ENCODE measurements at regions of chr17 and their contacts with region 1.

Region 1: GRCh38 chr17:5592382-5592781 is 8.1 kb upstream of the NLRP1 start:
- DNase-seq: no peak
- H3K4me3 Mint-ChIP-seq: no peak overlapping the region
- H3K27ac Mint-ChIP-seq: no peak overlapping the region
- H3K4me1 Mint-ChIP-seq: peaks cover under 1% of the 10 kb centered on the region
- H3K27me3 Mint-ChIP-seq: peaks cover 13% of the 10 kb centered on the region

Region 2: GRCh38 chr17:5706577-5707216 is 114.3 kb after region 1 on chr17:
- CTCF ChIA-PET with region 1: interaction called, 54 read pairs
- POLR2A ChIA-PET with region 1: no interaction called
- intact Hi-C with region 1: loop called (anchors 1 kb)
- DNase-seq: peak; percentile 72
- H3K4me3 Mint-ChIP-seq: no peak overlapping the region
- H3K27ac Mint-ChIP-seq: no peak overlapping the region
- H3K4me1 Mint-ChIP-seq: no peaks in the 10 kb centered on the region
- H3K27me3 Mint-ChIP-seq: peaks cover 15% of the 10 kb centered on the region

Region 3: GRCh38 chr17:6421700-6422604 is 829.6 kb after region 1 on chr17:
- CTCF ChIA-PET with region 1: interaction called, 20 read pairs
- POLR2A ChIA-PET with region 1: no interaction called
- intact Hi-C with region 1: loop called (anchors 1 kb)
- DNase-seq: peak; percentile 83
- H3K4me3 Mint-ChIP-seq: no peak overlapping the region
- H3K27ac Mint-ChIP-seq: no peak overlapping the region
- H3K4me1 Mint-ChIP-seq: peaks cover 2% of the 10 kb centered on the region
- H3K27me3 Mint-ChIP-seq: peaks cover 23% of the 10 kb centered on the region

Region 4: DNA sequence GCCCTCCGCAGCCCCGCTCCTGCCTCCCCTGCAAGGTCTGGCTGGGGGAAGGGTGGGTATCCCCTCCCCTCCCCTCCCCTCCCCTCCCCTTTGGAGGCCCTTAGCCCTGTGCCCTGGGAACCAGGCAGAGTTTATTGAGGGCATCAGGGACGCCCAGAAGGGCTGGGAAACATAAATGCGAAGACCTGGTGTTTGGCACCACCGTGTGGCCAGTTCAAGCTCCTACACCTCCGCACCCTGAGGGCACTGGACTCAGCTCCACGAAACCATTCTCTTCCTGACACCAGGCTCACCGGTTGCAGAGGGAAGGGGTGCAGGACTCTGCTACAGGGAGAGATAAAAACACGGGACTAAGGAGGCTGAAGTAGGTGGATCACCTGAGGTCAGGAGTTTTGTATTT is 843.6 kb after region 1 on chr17:
- CTCF ChIA-PET with region 1: interaction called, 15 read pairs
- POLR2A ChIA-PET with region 1: no interaction called
- intact Hi-C with region 1: no loop called
- DNase-seq: peak; percentile 72
- H3K4me3 Mint-ChIP-seq: no peak overlapping the region
- H3K27ac Mint-ChIP-seq: no peak overlapping the region
- H3K4me1 Mint-ChIP-seq: peaks cover 2% of the 10 kb centered on the region
- H3K27me3 Mint-ChIP-seq: peaks cover 17% of the 10 kb centered on the region

Measured in activated CD4-positive, alpha-beta memory T cell treated with anti-CD3 and anti-CD28 coated beads for 36 hours (primary cell).